Esophagus muscularis mucosa (tissue), 4 donors: ENCODE measurements at regions of chr18 and their contacts with region 1.

Region 1: DNA sequence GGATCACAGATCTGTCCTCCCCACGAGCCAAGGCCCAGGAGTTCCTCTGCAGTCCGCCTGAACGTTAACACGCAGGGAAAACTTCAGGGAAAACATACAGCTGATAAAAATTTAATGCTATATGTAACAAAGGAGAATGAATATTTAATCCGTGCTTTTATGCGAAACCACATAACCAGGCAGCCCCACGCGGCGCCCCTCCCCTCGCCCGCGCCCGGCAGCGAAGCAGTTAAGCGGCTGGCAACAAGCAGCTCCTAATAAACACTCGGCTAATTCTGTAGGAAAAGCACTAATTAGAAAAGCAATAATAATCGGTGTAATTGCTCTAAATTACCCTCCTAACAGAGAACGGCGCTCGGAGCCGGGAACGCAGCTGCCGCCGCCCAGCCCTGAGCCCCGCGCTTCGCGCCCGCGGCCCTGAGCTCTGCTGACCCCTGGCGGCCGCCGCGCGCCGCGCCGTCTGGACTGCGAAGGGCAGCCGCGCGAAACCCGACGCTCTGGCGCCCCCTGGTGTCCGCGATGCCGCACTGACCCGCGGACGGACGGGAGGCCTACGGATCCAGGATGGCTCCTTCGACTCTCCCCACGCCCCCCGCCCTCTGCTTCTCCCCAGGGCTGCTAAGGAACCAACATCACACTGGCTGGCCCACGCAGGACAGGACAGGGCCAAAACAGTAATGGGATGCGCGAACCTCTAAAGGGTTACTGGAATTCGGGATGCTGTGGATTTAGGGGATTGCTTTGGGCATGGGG is 181.4 kb downstream of the SMAD2 start:
- DNase-seq: peak; percentile 92
- H3K4me3 ChIP-seq: peak overlapping the region; percentile 42 to 57 (median 44)
- H3K27ac ChIP-seq: no peak overlapping the region
- H3K4me1 ChIP-seq: peaks cover 4 to 12% (median 7%) of the 10 kb centered on the region in 4 donors
- H3K27me3 ChIP-seq: peaks cover 0 to 25% (median 0%) of the 10 kb centered on the region in 4 donors
- CTCF ChIP-seq: peak in 2 of 3 experiments; percentile 100
- EP300 ChIP-seq: no peak
- POLR2A ChIP-seq: no peak

Region 2: GRCh38 chr18:47050468-47050867 is 698.6 kb before region 1 on chr18:
- intact Hi-C with region 1: loop called (anchors 5 kb)
- DNase-seq: no peak
- H3K4me3 ChIP-seq: no peak overlapping the region
- H3K27ac ChIP-seq: no peak overlapping the region
- H3K4me1 ChIP-seq: no peaks in the 10 kb centered on the region
- H3K27me3 ChIP-seq: no peaks in the 10 kb centered on the region
- CTCF ChIP-seq: peak; percentile 46 to 68 (median 47)
- EP300 ChIP-seq: no peak
- POLR2A ChIP-seq: no peak

Region 3: GRCh38 chr18:47100214-47100831 is 648.7 kb before region 1 on chr18:
- intact Hi-C with region 1: loop called (anchors 2 kb)
- DNase-seq: no peak
- H3K4me3 ChIP-seq: no peak overlapping the region
- H3K27ac ChIP-seq: no peak overlapping the region
- H3K4me1 ChIP-seq: peaks cover 0 to 8% (median 1%) of the 10 kb centered on the region in 4 donors
- H3K27me3 ChIP-seq: no peaks in the 10 kb centered on the region
- CTCF ChIP-seq: peak; percentile 70 to 76 (median 71)
- EP300 ChIP-seq: no peak
- POLR2A ChIP-seq: no peak

Region 4: GRCh38 chr18:47215554-47216138 is 533.4 kb before region 1 on chr18:
- intact Hi-C with region 1: loop called (anchors 5 kb)
- DNase-seq: no peak
- H3K4me3 ChIP-seq: no peak overlapping the region
- H3K27ac ChIP-seq: no peak overlapping the region
- H3K4me1 ChIP-seq: no peaks in the 10 kb centered on the region
- H3K27me3 ChIP-seq: peaks cover 0 to 45% (median 0%) of the 10 kb centered on the region in 4 donors
- CTCF ChIP-seq: peak; percentile 38 to 46 (median 42)
- EP300 ChIP-seq: no peak
- POLR2A ChIP-seq: no peak